ENCODE measurements at regions of chr7 and their contacts with region 1.

Region 1: DNA sequence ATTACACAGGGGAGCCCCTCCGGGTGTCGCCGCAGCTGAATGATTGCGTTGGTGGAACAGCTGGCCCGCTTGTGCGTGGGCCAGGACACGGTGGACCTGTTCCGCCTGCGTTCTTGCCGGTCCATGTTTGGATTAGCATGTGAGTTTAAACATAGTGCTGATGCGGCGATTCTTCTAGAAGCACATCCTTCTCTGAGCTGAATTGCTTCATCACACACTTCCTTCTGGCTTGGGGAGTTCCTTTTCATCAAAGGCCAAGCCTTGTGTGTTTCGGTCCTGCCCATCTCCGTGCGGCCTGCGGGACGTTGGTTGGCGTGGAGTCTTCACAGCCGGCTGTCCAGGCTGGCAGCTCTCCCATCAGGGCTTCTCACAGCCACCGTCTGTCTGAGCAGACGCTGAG is 45.5 kb upstream of the SLC29A4 start:
- DNase-seq: no peak
- H3K4me3 ChIP-seq: peak overlapping the region; percentile 38
- H3K27ac ChIP-seq: no peak overlapping the region
- H3K27me3 ChIP-seq: no peaks in the 10 kb centered on the region
- CTCF ChIP-seq: no peak

Region 2: DNA sequence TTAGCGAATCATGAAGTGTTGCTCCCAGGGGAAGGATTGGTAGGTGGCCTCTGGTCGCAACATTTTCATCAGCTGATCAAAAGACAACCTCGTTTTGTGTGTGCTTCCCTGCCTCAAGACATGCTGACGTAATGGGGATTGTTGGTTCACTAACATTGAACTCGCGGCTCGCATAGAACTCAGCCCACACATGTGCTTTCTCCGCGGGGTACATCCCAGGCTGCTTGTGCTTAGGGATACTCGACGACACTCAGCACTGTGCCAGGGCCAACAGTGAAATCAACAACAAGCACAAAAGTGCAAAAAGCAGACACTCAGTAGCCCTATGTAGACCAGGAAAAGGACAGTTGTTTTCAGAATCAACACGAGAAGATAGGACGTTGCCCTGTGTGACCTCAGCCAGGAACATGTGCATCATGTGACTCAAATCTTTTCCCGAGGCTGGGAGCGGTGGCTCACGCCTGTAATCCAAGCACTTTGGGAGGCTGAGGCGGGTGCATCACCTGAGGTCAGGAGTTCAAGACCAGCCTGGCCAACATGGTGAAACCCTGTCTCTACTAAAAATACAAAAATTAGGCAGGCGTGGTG is 26.4 kb before region 1 on chr7:
- CTCF ChIA-PET with region 1: no interaction called
- POLR2A ChIA-PET with region 1: no interaction called
- DNase-seq: no peak
- H3K4me3 ChIP-seq: no peak overlapping the region
- H3K27ac ChIP-seq: no peak overlapping the region
- H3K27me3 ChIP-seq: no peaks in the 10 kb centered on the region
- CTCF ChIP-seq: no peak

Region 3: GRCh38 chr7:5425507-5426225 is 188.4 kb after region 1 on chr7:
- CTCF ChIA-PET with region 1: interaction called, 5 read pairs
- POLR2A ChIA-PET with region 1: interaction called, 12 read pairs
- DNase-seq: peak; percentile 67
- H3K4me3 ChIP-seq: peak overlapping the region; percentile 86
- H3K27ac ChIP-seq: peak overlapping the region; percentile 97
- H3K27me3 ChIP-seq: no peaks in the 10 kb centered on the region
- CTCF ChIP-seq: no peak

Region 4: DNA sequence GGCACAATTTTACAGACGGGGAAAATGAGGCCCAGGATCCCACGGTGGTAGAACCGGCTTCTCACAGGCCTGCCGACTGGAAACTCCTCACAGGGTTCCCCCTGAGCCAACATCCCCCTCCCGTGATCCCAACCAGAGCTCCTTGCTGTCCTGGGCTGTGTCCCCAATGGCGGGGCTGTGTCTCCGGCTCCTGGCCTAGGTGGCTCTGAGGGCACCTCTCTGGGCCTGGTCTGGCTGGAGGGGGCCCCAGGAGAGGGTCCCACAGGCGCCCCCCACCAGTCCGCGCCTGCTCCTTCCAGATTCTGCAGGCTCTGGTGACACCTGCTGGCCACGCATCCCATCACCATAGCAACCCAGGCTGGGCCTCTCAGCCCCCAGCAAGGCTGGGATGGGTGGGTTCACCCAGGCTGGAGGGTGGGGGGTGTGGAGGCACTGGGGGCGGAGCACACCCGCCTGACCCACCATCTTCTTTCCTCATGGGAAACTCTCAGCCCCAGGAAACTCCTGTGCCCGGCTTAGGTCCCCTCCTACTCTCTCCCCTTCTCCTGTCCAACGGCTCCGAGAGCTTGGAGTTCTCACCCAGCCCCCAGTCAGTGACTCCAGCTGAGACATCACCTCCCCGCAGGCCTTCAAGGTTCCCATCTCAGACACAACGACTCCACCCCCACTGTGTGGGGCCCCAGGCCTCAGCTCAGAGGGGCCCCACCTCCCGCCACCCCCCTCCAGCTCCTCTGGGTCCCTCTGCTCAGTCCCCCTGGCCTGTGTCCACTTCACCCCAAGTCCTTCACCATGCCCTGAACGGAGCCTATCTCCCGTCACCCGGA is 213.5 kb after region 1 on chr7:
- CTCF ChIA-PET with region 1: interaction called, 27 read pairs
- POLR2A ChIA-PET with region 1: interaction called, 7 read pairs
- DNase-seq: no peak
- H3K4me3 ChIP-seq: no peak overlapping the region
- H3K27ac ChIP-seq: no peak overlapping the region
- H3K27me3 ChIP-seq: no peaks in the 10 kb centered on the region
- CTCF ChIP-seq: peak; percentile 57

Region 5: GRCh38 chr7:5494683-5495561 is 257.6 kb after region 1 on chr7:
- CTCF ChIA-PET with region 1: interaction called, 10 read pairs
- POLR2A ChIA-PET with region 1: interaction called, 3 read pairs
- DNase-seq: no peak
- H3K4me3 ChIP-seq: no peak overlapping the region
- H3K27ac ChIP-seq: peak overlapping the region; percentile 31
- H3K27me3 ChIP-seq: no peaks in the 10 kb centered on the region
- CTCF ChIP-seq: peak; percentile 98

Measured in AG04450 (cell line).